Activated naive CD4-positive, alpha-beta T cell treated with anti-CD3 and anti-CD28 coated beads for 36 hours (primary cell): ENCODE measurements at regions of chr3 and their contacts with region 1.

Region 1: GRCh38 chr3:3015185-3016089 is 94.7 kb downstream of the IL5RA start:
- DNase-seq: no peak
- H3K4me3 Mint-ChIP-seq: no peak overlapping the region
- H3K27ac Mint-ChIP-seq: no peak overlapping the region
- H3K4me1 Mint-ChIP-seq: no peaks in the 10 kb centered on the region
- H3K27me3 Mint-ChIP-seq: peaks cover 23% of the 10 kb centered on the region

Region 2: DNA sequence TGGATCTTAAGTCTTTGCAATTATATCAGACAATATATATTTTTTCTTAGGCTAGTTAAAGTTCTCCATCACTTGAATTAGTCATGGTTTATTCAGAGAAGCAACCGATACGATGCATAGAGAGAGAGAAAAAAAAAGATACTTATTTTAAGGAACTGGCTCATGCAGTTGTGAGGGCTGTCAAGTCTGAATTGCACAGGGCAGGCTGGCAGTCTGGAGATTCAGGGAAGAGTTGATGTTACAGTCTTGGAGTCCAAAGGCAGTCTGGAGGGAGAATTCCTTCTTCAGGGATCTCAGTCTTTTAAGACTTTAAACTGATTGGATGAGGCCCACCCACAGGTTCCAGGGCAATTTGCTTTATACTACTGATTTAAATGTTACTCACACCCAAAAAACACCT is 317.8 kb before region 1 on chr3:
- CTCF ChIA-PET with region 1: no interaction called
- intact Hi-C with region 1: loop called (anchors 10 kb)
- DNase-seq: no peak
- H3K4me3 Mint-ChIP-seq: no peak overlapping the region
- H3K27ac Mint-ChIP-seq: no peak overlapping the region
- H3K4me1 Mint-ChIP-seq: no peaks in the 10 kb centered on the region
- H3K27me3 Mint-ChIP-seq: no peaks in the 10 kb centered on the region

Region 3: GRCh38 chr3:2765002-2765579 is 250.3 kb before region 1 on chr3:
- CTCF ChIA-PET with region 1: interaction called, 4 read pairs
- intact Hi-C with region 1: loop called (anchors 1 kb)
- DNase-seq: peak; percentile 34
- H3K4me3 Mint-ChIP-seq: no peak overlapping the region
- H3K27ac Mint-ChIP-seq: no peak overlapping the region
- H3K4me1 Mint-ChIP-seq: no peaks in the 10 kb centered on the region
- H3K27me3 Mint-ChIP-seq: peaks cover 2% of the 10 kb centered on the region